ENCODE measurements at regions of chr1 and their contacts with region 1.

Region 1: GRCh38 chr1:9825454-9826090 is 1.8 kb upstream of the CLSTN1 start:
- DNase-seq: peak; percentile 59 to 67
- H3K4me3 ChIP-seq: peak overlapping the region in 2 of 4 experiments; percentile 68 to 86; a peak in 5 of 8 replicates
- H3K27ac ChIP-seq: no peak overlapping the region
- H3K4me1 ChIP-seq: peaks cover 4 to 18% (median 12%) of the 10 kb centered on the region in 4 experiments
- H3K27me3 ChIP-seq: peaks cover 0 to 15% (median 14%) of the 10 kb centered on the region in 4 experiments; a peak in 6 of 7 replicates
- CTCF ChIP-seq: no peak
- EP300 ChIP-seq: no peak
- POLR2A ChIP-seq: no peak
- RAD21 ChIP-seq: no peak

Region 2: GRCh38 chr1:9784508-9785133 is 41.0 kb before region 1 on chr1:
- CTCF ChIA-PET with region 1: interaction called, 66 read pairs
- POLR2A ChIA-PET with region 1: interaction called, 3 read pairs
- DNase-seq: no peak
- H3K4me3 ChIP-seq: no peak overlapping the region
- H3K27ac ChIP-seq: no peak overlapping the region
- H3K4me1 ChIP-seq: peaks cover 0 to 5% (median 1%) of the 10 kb centered on the region in 4 experiments; a peak in 3 of 7 replicates
- H3K27me3 ChIP-seq: no peaks in the 10 kb centered on the region
- CTCF ChIP-seq: peak in 2 of 3 experiments; percentile 76 to 79; a peak in 3 of 4 replicates
- EP300 ChIP-seq: no peak
- POLR2A ChIP-seq: no peak
- RAD21 ChIP-seq: peak; percentile 86 to 89

Region 3: DNA sequence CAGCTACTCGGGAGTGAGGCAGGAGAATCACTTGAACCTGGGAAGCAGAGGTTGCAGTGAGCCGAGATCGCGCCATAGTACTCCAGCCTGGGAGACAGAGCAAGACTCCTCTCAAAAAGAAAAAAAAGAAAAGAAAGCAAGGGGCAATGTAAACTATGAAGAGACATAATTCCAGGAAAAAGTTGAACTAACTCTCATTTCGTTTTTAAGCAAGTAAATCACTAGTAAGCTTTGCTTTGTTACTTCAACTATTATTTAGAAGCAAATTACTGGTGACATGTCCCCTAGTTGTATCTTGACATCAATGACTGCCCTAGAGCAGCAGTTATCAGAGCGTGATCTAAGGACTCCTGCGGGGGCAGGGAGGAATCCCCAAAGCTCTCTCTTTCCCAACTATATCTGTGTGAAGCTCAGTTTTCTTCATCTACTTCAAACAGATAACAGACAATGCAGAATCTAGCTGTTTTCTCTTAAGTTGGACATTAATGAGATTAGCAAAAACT is 20.5 kb before region 1 on chr1:
- CTCF ChIA-PET with region 1: interaction called, 10 read pairs
- POLR2A ChIA-PET with region 1: interaction called, 4 read pairs
- DNase-seq: no peak
- H3K4me3 ChIP-seq: no peak overlapping the region
- H3K27ac ChIP-seq: no peak overlapping the region
- H3K4me1 ChIP-seq: peaks cover 0 to 7% (median 4%) of the 10 kb centered on the region in 4 experiments; a peak in 4 of 7 replicates
- H3K27me3 ChIP-seq: no peaks in the 10 kb centered on the region
- CTCF ChIP-seq: no peak
- EP300 ChIP-seq: no peak
- POLR2A ChIP-seq: no peak
- RAD21 ChIP-seq: no peak

Region 4: GRCh38 chr1:9852410-9853248 is 27.1 kb after region 1 on chr1:
- CTCF ChIA-PET with region 1: interaction called, 14 read pairs
- POLR2A ChIA-PET with region 1: interaction called, 4 read pairs
- DNase-seq: no peak
- H3K4me3 ChIP-seq: no peak overlapping the region
- H3K27ac ChIP-seq: no peak overlapping the region
- H3K4me1 ChIP-seq: peaks cover 3 to 11% (median 8%) of the 10 kb centered on the region in 4 experiments
- H3K27me3 ChIP-seq: no peaks in the 10 kb centered on the region
- CTCF ChIP-seq: no peak
- EP300 ChIP-seq: no peak
- POLR2A ChIP-seq: no peak
- RAD21 ChIP-seq: no peak

Region 5: GRCh38 chr1:9867408-9868243 is 42.1 kb after region 1 on chr1:
- CTCF ChIA-PET with region 1: interaction called, 56 read pairs
- POLR2A ChIA-PET with region 1: interaction called, 5 read pairs
- DNase-seq: peak; percentile 56 to 99
- H3K4me3 ChIP-seq: no peak overlapping the region
- H3K27ac ChIP-seq: no peak overlapping the region
- H3K4me1 ChIP-seq: no peaks in the 10 kb centered on the region; a peak in 2 of 7 replicates
- H3K27me3 ChIP-seq: no peaks in the 10 kb centered on the region
- CTCF ChIP-seq: peak; percentile 97 to 100 (median 99)
- EP300 ChIP-seq: no peak
- POLR2A ChIP-seq: no peak
- RAD21 ChIP-seq: peak; percentile 99

Region 6: DNA sequence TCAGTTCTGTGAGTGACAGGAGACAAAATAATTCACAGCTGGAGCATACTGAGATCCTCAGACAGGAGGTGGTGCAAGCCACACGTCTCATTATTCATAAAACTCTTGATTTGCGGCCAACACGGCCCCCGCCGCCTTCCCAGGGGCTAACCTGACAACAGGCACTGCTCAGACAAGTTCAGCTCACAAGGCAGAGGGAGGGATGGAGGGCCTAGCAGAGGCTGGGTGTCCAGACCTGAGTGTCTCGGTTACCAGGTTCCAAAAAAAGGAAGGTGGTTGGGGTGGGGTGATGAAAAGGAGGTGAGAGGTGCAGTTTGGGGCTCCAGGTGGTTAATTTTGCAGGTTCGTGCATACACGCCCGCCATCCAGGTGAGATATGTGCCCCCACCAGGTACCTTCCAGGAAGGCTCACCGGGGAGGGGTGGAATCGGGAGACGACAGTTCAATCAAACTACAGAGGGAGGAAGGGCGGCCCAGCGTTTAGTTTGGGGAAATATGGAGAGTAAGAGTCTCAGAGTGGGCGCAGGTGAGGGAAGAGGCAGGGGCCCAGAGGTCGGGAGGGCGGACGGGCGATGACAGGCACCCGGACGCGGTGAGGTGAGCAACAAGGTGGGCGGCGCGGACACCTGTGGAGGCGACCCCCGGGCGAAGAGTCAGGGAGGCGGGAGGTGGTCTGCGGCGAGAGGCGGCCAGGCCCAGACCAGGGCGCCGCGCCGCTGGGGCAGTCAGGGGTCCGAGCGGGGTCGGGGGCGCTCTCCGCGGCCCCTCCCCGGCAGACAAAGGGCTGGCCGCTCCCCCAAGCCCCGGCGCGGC is 83.9 kb after region 1 on chr1:
- CTCF ChIA-PET with region 1: no interaction called
- POLR2A ChIA-PET with region 1: no interaction called
- DNase-seq: no peak
- H3K4me3 ChIP-seq: peak overlapping the region; percentile 76 to 99 (median 88)
- H3K27ac ChIP-seq: peak overlapping the region; percentile 41; the same call in 1 of the 2 replicates
- H3K4me1 ChIP-seq: peaks cover 2 to 6% (median 4%) of the 10 kb centered on the region in 4 experiments; a peak in 4 of 7 replicates
- H3K27me3 ChIP-seq: no peaks in the 10 kb centered on the region
- CTCF ChIP-seq: no peak
- EP300 ChIP-seq: no peak
- POLR2A ChIP-seq: no peak
- RAD21 ChIP-seq: no peak

Region 7: GRCh38 chr1:10027027-10027426 is 201.5 kb after region 1 on chr1:
- CTCF ChIA-PET with region 1: no interaction called
- POLR2A ChIA-PET with region 1: no interaction called
- DNase-seq: no peak
- H3K4me3 ChIP-seq: no peak overlapping the region
- H3K27ac ChIP-seq: no peak overlapping the region
- H3K4me1 ChIP-seq: no peaks in the 10 kb centered on the region
- H3K27me3 ChIP-seq: no peaks in the 10 kb centered on the region
- CTCF ChIP-seq: no peak
- EP300 ChIP-seq: no peak
- POLR2A ChIP-seq: no peak
- RAD21 ChIP-seq: no peak

Measured in H1 (cell line).